CD8-positive, alpha-beta memory T cell (primary cell): ENCODE measurements at regions of chr22 and their contacts with region 1.

Region 1: GRCh38 chr22:21972293-21972779 is 10.3 kb downstream of the TOP3B start:
- DNase-seq: peak; percentile 28 to 63 (median 30)
- H3K4me3 ChIP-seq: no peak overlapping the region
- H3K4me3 Mint-ChIP-seq: no peak overlapping the region
- H3K27ac ChIP-seq: no peak overlapping the region
- H3K27ac Mint-ChIP-seq: no peak overlapping the region
- H3K4me1 ChIP-seq: no peaks in the 10 kb centered on the region
- H3K4me1 Mint-ChIP-seq: peaks cover 8 to 13% (median 10%) of the 10 kb centered on the region in 3 donors
- H3K27me3 ChIP-seq: no peaks in the 10 kb centered on the region
- H3K27me3 Mint-ChIP-seq: no peaks in the 10 kb centered on the region

Region 2: GRCh38 chr22:21599053-21599893 is 373.1 kb before region 1 on chr22:
- CTCF ChIA-PET with region 1: no interaction called
- POLR2A ChIA-PET with region 1: interaction called, 13 read pairs
- DNase-seq: no peak
- H3K4me3 ChIP-seq: no peak overlapping the region
- H3K4me3 Mint-ChIP-seq: peak overlapping the region in 1 of 7 donors; percentile 61
- H3K27ac ChIP-seq: no peak overlapping the region
- H3K27ac Mint-ChIP-seq: peak overlapping the region in 5 of 8 donors; percentile 16 to 90 (median 63)
- H3K4me1 ChIP-seq: peaks cover 7% of the 10 kb centered on the region
- H3K4me1 Mint-ChIP-seq: peaks cover 40 to 58% (median 45%) of the 10 kb centered on the region in 3 donors
- H3K27me3 ChIP-seq: no peaks in the 10 kb centered on the region
- H3K27me3 Mint-ChIP-seq: no peaks in the 10 kb centered on the region

Region 3: GRCh38 chr22:21982338-21982965 is 10.1 kb after region 1 on chr22 and contains the start of gene TOP3B:
- CTCF ChIA-PET with region 1: interaction called, 18 read pairs
- POLR2A ChIA-PET with region 1: no interaction called
- DNase-seq: peak; percentile 66 to 84 (median 72)
- H3K4me3 ChIP-seq: peak within 1 kb of the TSS; percentile 93
- H3K4me3 Mint-ChIP-seq: peak within 1 kb of the TSS; percentile 88 to 95 (median 90)
- H3K27ac ChIP-seq: peak within 1 kb of the TSS; percentile 98
- H3K27ac Mint-ChIP-seq: peak within 1 kb of the TSS; percentile 75 to 94 (median 86)
- H3K4me1 ChIP-seq: peaks cover 17% of the 10 kb centered on the region
- H3K4me1 Mint-ChIP-seq: peaks cover 39 to 51% (median 44%) of the 10 kb centered on the region in 3 donors
- H3K27me3 ChIP-seq: no peaks in the 10 kb centered on the region
- H3K27me3 Mint-ChIP-seq: no peaks in the 10 kb centered on the region
- total RNA-seq, gene TOP3B: 30.1 to 36.9 TPM